GM10248 (cell line): ENCODE measurements at regions of chr1 and their contacts with region 1.

Region 1: GRCh38 chr1:50358962-50359361 is 64.3 kb downstream of the DMRTA2 start:
- DNase-seq: no peak
- CTCF ChIP-seq: no peak

Region 2: DNA sequence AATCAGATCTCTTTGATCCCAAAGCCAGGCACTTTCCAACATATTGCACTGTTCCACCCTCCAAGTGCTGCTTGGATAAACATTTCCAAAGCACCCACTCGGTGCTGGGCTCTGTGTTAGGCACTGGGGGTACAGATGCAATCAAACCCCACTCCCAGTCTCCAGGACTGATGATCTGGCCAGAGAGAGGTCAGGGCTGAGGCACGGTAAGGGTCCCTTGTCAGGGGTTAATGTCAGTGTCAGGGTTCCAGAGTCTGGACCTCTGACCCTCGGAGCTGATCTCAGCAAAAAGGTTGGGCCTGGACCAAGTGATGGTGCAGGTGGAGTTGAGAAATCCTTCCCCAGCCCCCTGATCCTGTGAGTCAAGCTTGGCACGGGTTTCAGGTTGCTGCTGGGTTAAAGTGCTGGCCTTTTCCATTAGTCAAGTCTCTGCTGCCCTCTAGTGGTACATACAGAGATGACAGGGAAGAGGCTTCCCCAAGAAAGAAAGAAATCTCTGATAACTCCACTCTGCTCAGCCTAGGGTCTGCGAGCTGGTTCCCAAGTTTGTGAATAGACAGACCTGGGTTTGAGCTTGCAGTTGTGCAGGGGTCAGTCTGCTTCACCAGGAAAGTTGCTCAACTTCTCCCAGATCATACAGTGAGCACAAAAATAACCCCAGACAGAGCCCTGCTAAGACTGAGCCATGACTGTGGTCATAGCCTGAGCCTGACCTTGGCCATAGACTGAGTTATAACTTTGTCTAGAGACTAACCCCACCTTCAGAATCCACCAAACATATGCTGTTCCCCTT is 10.3 kb before region 1 on chr1:
- CTCF ChIA-PET with region 1: interaction called, 11 read pairs
- POLR2A ChIA-PET with region 1: no interaction called
- DNase-seq: peak; percentile 76
- CTCF ChIP-seq: peak; percentile 74

Region 3: GRCh38 chr1:50378770-50379169 is 19.8 kb after region 1 on chr1:
- CTCF ChIA-PET with region 1: no interaction called
- POLR2A ChIA-PET with region 1: no interaction called
- DNase-seq: no peak
- CTCF ChIP-seq: no peak

Region 4: DNA sequence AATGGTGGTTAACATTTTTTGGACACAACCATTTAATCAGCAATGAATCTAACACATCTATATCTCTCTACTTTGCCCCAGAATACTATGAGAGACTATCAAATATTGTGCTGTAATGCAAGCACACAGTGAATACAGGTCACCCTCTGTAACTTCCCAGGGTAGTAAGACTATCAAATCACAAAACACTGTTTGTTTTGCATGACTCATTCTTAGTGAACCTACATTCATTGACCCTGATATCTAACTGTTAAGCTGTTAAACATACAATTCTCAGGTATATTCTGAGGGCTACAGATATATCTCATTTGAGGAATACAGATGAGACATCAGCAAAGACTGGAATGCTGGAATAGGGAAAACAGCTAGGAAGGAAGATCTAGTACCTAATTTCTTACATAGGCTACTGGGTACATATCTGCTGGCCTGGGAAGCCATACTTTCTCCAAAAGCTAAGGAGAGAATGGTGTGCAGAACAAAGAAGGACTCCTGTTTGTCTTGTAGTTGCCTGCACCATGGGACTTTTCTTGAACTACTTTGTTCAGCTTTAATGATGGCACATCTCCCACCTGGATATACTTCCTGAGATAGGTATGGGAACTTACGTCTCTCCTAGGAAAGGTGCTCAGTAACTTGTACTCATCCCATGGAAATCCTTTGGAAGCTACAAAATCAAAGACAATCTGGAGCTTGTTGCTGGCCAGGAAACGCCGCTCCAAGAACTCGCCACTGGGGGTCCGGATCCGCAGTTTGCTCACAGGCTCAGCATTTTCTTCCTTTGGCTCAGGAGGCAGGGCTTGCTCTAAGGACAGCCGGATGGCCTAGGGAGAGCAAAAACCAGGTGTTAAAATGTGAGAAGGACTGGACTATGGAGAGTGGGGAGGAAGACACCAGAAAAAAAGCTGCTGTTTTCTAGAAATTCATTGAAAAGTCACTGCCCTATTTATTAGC is 116.2 kb after region 1 on chr1:
- CTCF ChIA-PET with region 1: no interaction called
- POLR2A ChIA-PET with region 1: no interaction called
- DNase-seq: no peak
- CTCF ChIP-seq: no peak